PC-9 (cell line): ENCODE measurements at regions of chrX and their contacts with region 1.

Region 1: GRCh38 chrX:27619975-27620374 is 29.8 kb downstream of the DCAF8L2 start:
- DNase-seq: no peak
- H3K4me3 ChIP-seq: no peak overlapping the region
- H3K27ac ChIP-seq: no peak overlapping the region
- H3K4me1 ChIP-seq: no peaks in the 10 kb centered on the region
- H3K27me3 ChIP-seq: no peaks in the 10 kb centered on the region
- CTCF ChIP-seq: peak; percentile 63

Region 2: GRCh38 chrX:27555514-27555913 is 64.5 kb before region 1 on chrX:
- CTCF ChIA-PET with region 1: interaction called, 3 read pairs
- POLR2A ChIA-PET with region 1: no interaction called
- intact Hi-C with region 1: loop called (anchors 10 kb)
- DNase-seq: no peak
- H3K4me3 ChIP-seq: no peak overlapping the region
- H3K27ac ChIP-seq: no peak overlapping the region
- H3K4me1 ChIP-seq: no peaks in the 10 kb centered on the region
- H3K27me3 ChIP-seq: no peaks in the 10 kb centered on the region
- CTCF ChIP-seq: peak; percentile 58

Region 3: GRCh38 chrX:27565992-27566391 is 54.0 kb before region 1 on chrX:
- CTCF ChIA-PET with region 1: no interaction called
- POLR2A ChIA-PET with region 1: no interaction called
- intact Hi-C with region 1: no loop called
- DNase-seq: no peak
- H3K4me3 ChIP-seq: no peak overlapping the region
- H3K27ac ChIP-seq: no peak overlapping the region
- H3K4me1 ChIP-seq: no peaks in the 10 kb centered on the region
- H3K27me3 ChIP-seq: no peaks in the 10 kb centered on the region
- CTCF ChIP-seq: no peak